ENCODE measurements at regions of chr11 and their contacts with region 1.

Region 1: GRCh38 chr11:129230006-129230405 is 37.9 kb upstream of the ARHGAP32 start:
- DNase-seq: peak; percentile 12
- ATAC-seq: no peak
- H3K4me3 ChIP-seq: no peak overlapping the region
- H3K27ac ChIP-seq: no peak overlapping the region
- H3K4me1 ChIP-seq: no peaks in the 10 kb centered on the region
- H3K27me3 ChIP-seq: no peaks in the 10 kb centered on the region
- CTCF ChIP-seq: no peak; the same call in 1 of the 2 replicates
- POLR2A ChIP-seq: no peak
- RAD21 ChIP-seq: no peak

Region 2: DNA sequence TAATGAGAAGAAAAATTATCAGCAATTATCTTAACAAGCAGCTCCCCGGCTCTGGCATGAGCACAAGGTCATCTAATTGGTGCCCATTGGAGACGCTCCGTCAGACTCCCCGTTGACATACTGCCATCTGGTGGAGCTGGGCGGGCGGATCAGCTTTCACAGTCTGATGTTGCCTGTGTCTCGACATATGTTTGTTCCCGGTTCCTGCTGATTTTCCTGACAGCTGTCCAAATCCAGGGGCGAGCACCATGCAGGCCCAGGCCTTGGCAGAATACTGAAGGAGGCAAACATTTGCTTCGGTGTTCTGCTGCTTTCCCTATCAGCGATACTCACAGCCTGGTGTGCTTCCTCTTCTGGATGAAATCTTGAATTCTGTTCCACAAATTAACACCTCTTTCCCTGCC is 101.9 kb after region 1 on chr11:
- CTCF ChIA-PET with region 1: no interaction called
- POLR2A ChIA-PET with region 1: no interaction called
- dilution Hi-C with region 1: no loop called
- in situ Hi-C with region 1: no loop called
- intact Hi-C with region 1: loop called (anchors 1 kb)
- DNase-seq: peak; percentile 69
- ATAC-seq: peak; percentile 99
- H3K4me3 ChIP-seq: no peak overlapping the region
- H3K27ac ChIP-seq: no peak overlapping the region
- H3K4me1 ChIP-seq: no peaks in the 10 kb centered on the region
- H3K27me3 ChIP-seq: no peaks in the 10 kb centered on the region
- CTCF ChIP-seq: peak; percentile 92
- POLR2A ChIP-seq: no peak
- RAD21 ChIP-seq: peak; percentile 97

Measured in IMR-90 (cell line).